PC-9 (cell line): ENCODE measurements at regions of chr5 and their contacts with region 1.

Region 1: DNA sequence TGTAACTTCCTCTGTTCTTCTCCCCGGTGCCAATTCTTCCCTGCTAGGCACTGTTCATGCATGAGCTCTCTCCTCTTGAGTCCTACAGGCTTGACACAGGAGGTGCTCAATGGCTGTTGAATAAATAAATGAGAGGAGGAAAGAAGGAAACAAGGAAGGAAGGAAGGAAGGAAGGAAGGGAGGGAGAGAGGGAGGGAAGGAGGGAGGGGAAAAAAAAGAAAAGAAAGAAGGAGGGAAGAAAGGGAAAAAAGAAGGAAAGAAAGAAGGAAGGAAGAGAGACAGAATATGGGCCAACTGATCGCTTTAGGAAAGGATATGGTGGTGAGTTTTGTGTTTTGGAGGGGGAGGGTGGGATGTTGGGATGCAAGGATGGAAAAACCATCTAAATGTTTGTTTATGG is 6.4 kb downstream of the KCNMB1 start:
- DNase-seq: no peak
- H3K4me3 ChIP-seq: no peak overlapping the region
- H3K27ac ChIP-seq: no peak overlapping the region
- H3K4me1 ChIP-seq: peaks cover 22% of the 10 kb centered on the region
- H3K27me3 ChIP-seq: no peaks in the 10 kb centered on the region
- CTCF ChIP-seq: no peak

Region 2: GRCh38 chr5:170293273-170293672 is 89.5 kb before region 1 on chr5:
- CTCF ChIA-PET with region 1: no interaction called
- POLR2A ChIA-PET with region 1: no interaction called
- intact Hi-C with region 1: no loop called
- DNase-seq: no peak
- H3K4me3 ChIP-seq: no peak overlapping the region
- H3K27ac ChIP-seq: no peak overlapping the region
- H3K4me1 ChIP-seq: no peaks in the 10 kb centered on the region
- H3K27me3 ChIP-seq: peaks cover 54% of the 10 kb centered on the region
- CTCF ChIP-seq: no peak

Region 3: GRCh38 chr5:170393235-170393634 is 10.4 kb after region 1 on chr5:
- CTCF ChIA-PET with region 1: interaction called, 14 read pairs
- POLR2A ChIA-PET with region 1: no interaction called
- intact Hi-C with region 1: no loop called
- DNase-seq: no peak
- H3K4me3 ChIP-seq: no peak overlapping the region
- H3K27ac ChIP-seq: no peak overlapping the region
- H3K4me1 ChIP-seq: no peaks in the 10 kb centered on the region
- H3K27me3 ChIP-seq: peaks cover 40% of the 10 kb centered on the region
- CTCF ChIP-seq: no peak